ENCODE measurements at regions of chr5 and their contacts with region 1.

Region 1: DNA sequence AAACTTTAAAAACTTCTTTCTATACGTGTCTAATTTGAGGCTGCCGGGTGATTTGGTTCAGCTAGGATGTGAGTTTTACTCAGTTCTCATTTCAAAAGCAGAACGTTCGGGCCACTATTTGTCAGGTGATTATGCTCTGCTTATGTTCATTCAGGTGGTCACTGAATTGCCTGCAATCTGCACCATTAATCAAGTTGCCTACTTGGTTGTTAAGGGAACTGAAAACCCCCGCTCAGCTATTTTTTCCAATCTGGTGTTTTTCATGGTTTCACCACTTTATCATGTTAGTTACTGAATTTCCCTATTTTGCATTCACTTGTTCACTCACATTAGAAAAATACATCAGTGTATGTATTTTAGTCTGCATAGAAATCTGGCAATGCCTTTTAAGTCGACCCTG is 523.0 kb downstream of the CSNK1G3 start:
- DNase-seq: peak; percentile 90
- ATAC-seq: peak; percentile 94
- H3K4me3 ChIP-seq: peak overlapping the region in 1 of 5 experiments; percentile 31
- H3K4me3 Mint-ChIP-seq: peak overlapping the region; percentile 69
- H3K27ac ChIP-seq: peak overlapping the region; percentile 45 to 71
- H3K27ac Mint-ChIP-seq: peak overlapping the region; percentile 59
- H3K4me1 ChIP-seq: peaks cover 22 to 33% of the 10 kb centered on the region in 2 donors
- H3K4me1 Mint-ChIP-seq: peaks cover 35% of the 10 kb centered on the region
- H3K27me3 ChIP-seq: no peaks in the 10 kb centered on the region
- H3K27me3 Mint-ChIP-seq: no peaks in the 10 kb centered on the region
- CTCF ChIP-seq: no peak

Region 2: DNA sequence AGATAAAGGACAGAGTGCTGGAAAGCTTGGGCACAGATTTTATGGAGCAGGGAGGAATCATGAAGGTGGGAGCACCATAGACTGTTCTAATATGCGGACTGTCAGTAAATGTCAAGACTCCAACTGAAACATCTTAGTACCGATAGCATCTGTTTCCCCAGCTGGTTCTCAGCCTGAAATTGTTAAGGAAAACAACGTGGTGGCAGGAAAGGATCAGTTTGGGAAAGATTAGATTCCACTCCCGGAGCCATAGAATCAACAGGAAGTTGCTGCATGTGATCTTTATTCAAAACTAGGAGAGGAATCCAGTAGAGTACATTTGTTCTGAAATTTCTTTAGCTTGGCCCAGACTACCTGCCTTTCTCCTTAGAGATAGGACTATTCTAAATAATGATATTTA is 36.1 kb after region 1 on chr5:
- CTCF ChIA-PET with region 1: no interaction called
- POLR2A ChIA-PET with region 1: no interaction called
- intact Hi-C with region 1: loop called (anchors 5 kb)
- DNase-seq: no peak
- ATAC-seq: no peak
- H3K4me3 ChIP-seq: no peak overlapping the region
- H3K4me3 Mint-ChIP-seq: no peak overlapping the region
- H3K27ac ChIP-seq: no peak overlapping the region
- H3K27ac Mint-ChIP-seq: no peak overlapping the region
- H3K4me1 ChIP-seq: peaks cover 4 to 12% of the 10 kb centered on the region in 2 donors
- H3K4me1 Mint-ChIP-seq: peaks cover 24% of the 10 kb centered on the region
- H3K27me3 ChIP-seq: no peaks in the 10 kb centered on the region
- H3K27me3 Mint-ChIP-seq: no peaks in the 10 kb centered on the region
- CTCF ChIP-seq: no peak

Region 3: GRCh38 chr5:124162779-124163532 is 128.0 kb after region 1 on chr5:
- CTCF ChIA-PET with region 1: no interaction called
- POLR2A ChIA-PET with region 1: no interaction called
- intact Hi-C with region 1: loop called (anchors 5 kb)
- DNase-seq: peak; percentile 29
- ATAC-seq: peak; percentile 73
- H3K4me3 ChIP-seq: peak overlapping the region in 2 of 5 experiments; percentile 1 to 27
- H3K4me3 Mint-ChIP-seq: peak overlapping the region; percentile 61
- H3K27ac ChIP-seq: peak overlapping the region in 1 of 2 donors; percentile 32
- H3K27ac Mint-ChIP-seq: peak overlapping the region; percentile 7
- H3K4me1 ChIP-seq: peaks cover 30 to 35% of the 10 kb centered on the region in 2 donors
- H3K4me1 Mint-ChIP-seq: peaks cover 50% of the 10 kb centered on the region
- H3K27me3 ChIP-seq: no peaks in the 10 kb centered on the region
- H3K27me3 Mint-ChIP-seq: no peaks in the 10 kb centered on the region
- CTCF ChIP-seq: no peak